Heart left ventricle (tissue), 16 donors: ENCODE measurements at regions of chr10 and their contacts with region 1.

Region 1: DNA sequence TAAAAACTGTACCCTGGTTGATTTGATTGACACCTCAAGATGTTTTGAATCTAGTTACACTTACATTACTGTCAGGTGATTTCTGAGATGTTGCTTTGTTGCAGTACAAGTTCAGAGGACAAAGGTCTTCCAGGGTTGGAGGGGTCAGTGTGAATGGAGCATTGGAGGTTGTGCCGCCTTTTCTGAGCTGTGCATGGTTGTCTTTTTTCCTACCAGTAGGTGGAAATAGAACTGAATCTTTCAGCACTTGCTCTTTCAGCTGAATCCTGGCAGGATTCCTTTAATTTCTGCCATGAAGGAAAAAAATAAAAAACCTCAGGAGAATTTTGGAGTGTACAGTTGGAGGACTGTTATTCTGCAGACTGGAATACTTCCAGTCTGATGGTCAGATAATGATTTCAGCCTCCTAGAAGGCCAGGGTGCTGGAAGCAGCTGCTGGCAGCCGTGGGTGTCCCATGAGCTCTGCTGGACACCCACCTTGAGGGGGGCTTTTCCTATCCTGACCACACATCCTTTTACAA is 82.7 kb downstream of the PLCE1 start:
- DNase-seq: no peak
- ATAC-seq: peak; percentile 33 to 86 (median 82)
- H3K4me3 ChIP-seq: no peak overlapping the region
- H3K27ac ChIP-seq: peak overlapping the region in 6 of 12 donors; percentile 9 to 65 (median 36)
- H3K4me1 ChIP-seq: peaks cover 0 to 26% (median 19%) of the 10 kb centered on the region in 12 donors
- H3K27me3 ChIP-seq: no peaks in the 10 kb centered on the region
- CTCF ChIP-seq: peak; percentile 26 to 64 (median 48)
- POLR2A ChIP-seq: no peak

Region 2: DNA sequence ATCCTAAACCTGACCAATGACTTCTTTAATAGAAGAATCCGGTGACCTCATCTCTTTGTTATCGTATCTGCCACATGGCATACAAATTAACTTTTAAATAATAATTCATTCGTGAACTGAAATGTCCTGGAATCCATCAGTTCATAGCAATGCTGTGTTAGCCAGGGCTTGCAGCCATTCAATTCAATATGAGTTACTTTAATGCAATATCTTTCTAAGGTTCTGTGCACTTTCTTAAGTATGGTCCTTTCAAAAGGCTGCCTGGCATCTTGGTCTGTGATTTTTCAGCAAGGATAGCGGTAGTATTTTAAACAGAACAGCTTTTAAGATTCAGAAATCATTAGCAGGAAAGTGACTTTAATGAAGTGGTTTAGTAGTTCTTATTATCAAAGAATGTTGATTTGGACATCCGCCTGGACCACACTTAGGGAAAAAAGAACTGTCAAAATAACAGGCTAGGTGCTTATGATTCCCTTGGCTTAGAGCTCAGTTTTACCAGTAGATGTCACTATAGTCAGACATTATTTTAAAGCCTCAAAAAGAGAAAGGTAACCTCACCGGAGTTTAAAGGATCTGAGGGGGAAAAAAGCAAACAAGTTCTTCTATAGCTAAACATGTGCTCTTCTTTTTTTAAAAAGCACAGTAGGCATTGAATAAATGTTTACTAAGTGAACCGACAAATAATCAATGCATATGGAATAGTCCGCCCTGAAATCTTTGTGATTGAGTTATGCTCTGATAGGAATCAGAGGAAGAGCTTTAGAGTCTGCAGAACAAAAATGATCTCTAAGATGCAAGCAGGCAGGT is 159.9 kb before region 1 on chr10:
- intact Hi-C with region 1: loop called in 3 of 10 experiments (anchors 10 kb)
- DNase-seq: no peak
- ATAC-seq: peak in 3 of 4 donors; percentile 63 to 72 (median 66)
- H3K4me3 ChIP-seq: peak overlapping the region in 7 of 12 donors; percentile 4 to 36 (median 14)
- H3K27ac ChIP-seq: no peak overlapping the region
- H3K4me1 ChIP-seq: peaks cover 0 to 13% (median 4%) of the 10 kb centered on the region in 12 donors
- H3K27me3 ChIP-seq: no peaks in the 10 kb centered on the region
- CTCF ChIP-seq: peak in 11 of 12 donors; percentile 33 to 70 (median 56)
- POLR2A ChIP-seq: no peak

Region 3: DNA sequence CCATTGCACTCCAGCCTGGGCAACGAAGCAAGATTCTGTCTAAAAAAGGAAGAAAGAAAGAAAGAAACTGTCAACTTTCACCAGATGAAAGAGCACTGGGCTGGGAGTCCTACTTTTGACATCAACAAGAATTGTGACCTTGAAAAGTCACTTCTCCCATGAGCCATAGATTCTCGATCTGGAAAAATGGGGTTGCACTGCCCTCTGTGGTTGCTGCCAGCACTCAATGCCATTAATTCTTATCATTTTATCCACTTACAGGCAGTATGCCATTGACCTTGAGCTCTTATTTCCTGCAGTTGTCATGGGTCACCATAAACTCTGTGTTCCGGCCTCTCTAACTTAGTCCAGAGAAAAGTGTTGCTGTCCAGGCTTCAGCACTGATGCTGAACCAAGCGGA is 149.2 kb after region 1 on chr10:
- intact Hi-C with region 1: loop called in 2 of 10 experiments (anchors 10 kb)
- DNase-seq: no peak
- ATAC-seq: peak in 3 of 4 donors; percentile 44 to 63 (median 61)
- H3K4me3 ChIP-seq: no peak overlapping the region
- H3K27ac ChIP-seq: peak overlapping the region in 5 of 12 donors; percentile 21 to 51 (median 41)
- H3K4me1 ChIP-seq: peaks cover 0 to 35% (median 6%) of the 10 kb centered on the region in 12 donors
- H3K27me3 ChIP-seq: no peaks in the 10 kb centered on the region
- CTCF ChIP-seq: peak in 4 of 12 donors; percentile 28 to 35 (median 33)
- POLR2A ChIP-seq: no peak

Region 4: DNA sequence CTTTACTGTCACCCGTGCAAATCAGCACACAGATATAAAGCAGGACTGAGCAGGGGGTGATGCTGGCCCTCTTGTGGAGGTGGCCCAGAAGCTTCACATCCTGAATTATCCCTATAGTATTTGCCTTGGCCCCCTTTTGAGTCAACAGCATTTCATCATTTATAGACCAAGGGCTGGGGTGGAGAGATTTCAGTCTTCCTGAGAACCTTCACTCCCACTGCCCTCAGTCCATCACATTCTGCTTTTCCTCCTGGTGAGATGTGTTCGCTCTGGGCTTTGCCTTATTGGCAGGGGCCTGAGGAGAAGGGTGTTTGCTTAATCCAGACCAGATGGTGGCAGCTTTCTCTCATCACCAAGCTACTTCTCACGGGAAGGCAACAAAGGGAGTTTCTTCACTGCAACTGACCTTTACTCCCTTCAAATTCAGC is 238.7 kb after region 1 on chr10:
- intact Hi-C with region 1: loop called in 8 of 10 experiments (anchors 2 to 10 kb)
- DNase-seq: no peak
- ATAC-seq: peak in 2 of 4 donors; percentile 11 to 47
- H3K4me3 ChIP-seq: no peak overlapping the region
- H3K27ac ChIP-seq: peak overlapping the region in 6 of 12 donors; percentile 2 to 45 (median 24)
- H3K4me1 ChIP-seq: peaks cover 0 to 24% (median 0%) of the 10 kb centered on the region in 12 donors
- H3K27me3 ChIP-seq: no peaks in the 10 kb centered on the region
- CTCF ChIP-seq: no peak
- POLR2A ChIP-seq: no peak

Region 5: GRCh38 chr10:94439275-94439861 is 363.0 kb after region 1 on chr10:
- intact Hi-C with region 1: loop called in 1 of 10 experiments (anchors 10 kb)
- DNase-seq: peak in 2 of 5 donors; percentile 39 to 43
- ATAC-seq: peak in 3 of 4 donors; percentile 37 to 70 (median 46)
- H3K4me3 ChIP-seq: no peak overlapping the region
- H3K27ac ChIP-seq: no peak overlapping the region
- H3K4me1 ChIP-seq: peaks cover 0 to 21% (median 5%) of the 10 kb centered on the region in 12 donors
- H3K27me3 ChIP-seq: no peaks in the 10 kb centered on the region
- CTCF ChIP-seq: peak in 4 of 12 donors; percentile 11 to 24 (median 14)
- POLR2A ChIP-seq: no peak